ENCODE measurements at regions of chr12 and their contacts with region 1.

Region 1: GRCh38 chr12:89709157-89709994 is 738 bp upstream of the ATP2B1 start:
- DNase-seq: peak; percentile 97
- H3K4me3 Mint-ChIP-seq: peak overlapping the region; percentile 94
- H3K27ac Mint-ChIP-seq: peak overlapping the region; percentile 95
- H3K4me1 Mint-ChIP-seq: peaks cover 22% of the 10 kb centered on the region
- H3K27me3 Mint-ChIP-seq: no peaks in the 10 kb centered on the region
- CTCF ChIP-seq: no peak

Region 2: DNA sequence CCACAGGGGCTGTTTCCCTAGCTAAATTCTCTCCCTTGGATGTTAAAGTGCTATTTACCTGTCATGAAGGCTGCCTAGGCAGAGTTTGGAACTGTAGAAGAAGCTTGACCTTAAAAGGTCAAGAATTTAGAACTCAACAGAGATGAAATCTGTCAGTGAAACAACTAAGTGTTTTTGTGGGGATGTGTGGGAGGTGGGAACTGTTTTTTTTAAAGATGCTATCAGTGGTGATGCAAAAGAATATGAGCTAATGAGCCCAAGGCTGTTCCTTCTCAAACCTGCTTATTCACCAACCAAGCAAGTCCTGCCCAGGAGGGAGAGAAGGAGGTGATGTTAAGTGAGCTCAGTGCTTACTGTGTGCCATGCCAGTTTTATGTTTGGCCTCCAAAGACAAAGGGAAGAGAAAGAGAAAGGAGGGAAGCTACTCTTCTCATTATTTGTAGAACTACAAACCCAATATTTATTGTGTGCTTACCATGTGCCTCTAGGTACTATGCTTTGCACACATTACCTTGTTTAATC is 142.7 kb before region 1 on chr12:
- CTCF ChIA-PET with region 1: interaction called, 5 read pairs
- POLR2A ChIA-PET with region 1: interaction called, 16 read pairs
- intact Hi-C with region 1: no loop called
- DNase-seq: peak; percentile 67
- H3K4me3 Mint-ChIP-seq: peak overlapping the region; percentile 2
- H3K27ac Mint-ChIP-seq: peak overlapping the region; percentile 80
- H3K4me1 Mint-ChIP-seq: peaks cover 52% of the 10 kb centered on the region
- H3K27me3 Mint-ChIP-seq: no peaks in the 10 kb centered on the region
- CTCF ChIP-seq: no peak

Region 3: GRCh38 chr12:89756585-89757321 is 47.4 kb after region 1 on chr12:
- CTCF ChIA-PET with region 1: interaction called, 4 read pairs
- POLR2A ChIA-PET with region 1: interaction called, 34 read pairs
- intact Hi-C with region 1: loop called (anchors 1 kb)
- DNase-seq: peak; percentile 98
- H3K4me3 Mint-ChIP-seq: peak overlapping the region; percentile 38
- H3K27ac Mint-ChIP-seq: peak overlapping the region; percentile 95
- H3K4me1 Mint-ChIP-seq: peaks cover 34% of the 10 kb centered on the region
- H3K27me3 Mint-ChIP-seq: no peaks in the 10 kb centered on the region
- CTCF ChIP-seq: no peak

Region 4: DNA sequence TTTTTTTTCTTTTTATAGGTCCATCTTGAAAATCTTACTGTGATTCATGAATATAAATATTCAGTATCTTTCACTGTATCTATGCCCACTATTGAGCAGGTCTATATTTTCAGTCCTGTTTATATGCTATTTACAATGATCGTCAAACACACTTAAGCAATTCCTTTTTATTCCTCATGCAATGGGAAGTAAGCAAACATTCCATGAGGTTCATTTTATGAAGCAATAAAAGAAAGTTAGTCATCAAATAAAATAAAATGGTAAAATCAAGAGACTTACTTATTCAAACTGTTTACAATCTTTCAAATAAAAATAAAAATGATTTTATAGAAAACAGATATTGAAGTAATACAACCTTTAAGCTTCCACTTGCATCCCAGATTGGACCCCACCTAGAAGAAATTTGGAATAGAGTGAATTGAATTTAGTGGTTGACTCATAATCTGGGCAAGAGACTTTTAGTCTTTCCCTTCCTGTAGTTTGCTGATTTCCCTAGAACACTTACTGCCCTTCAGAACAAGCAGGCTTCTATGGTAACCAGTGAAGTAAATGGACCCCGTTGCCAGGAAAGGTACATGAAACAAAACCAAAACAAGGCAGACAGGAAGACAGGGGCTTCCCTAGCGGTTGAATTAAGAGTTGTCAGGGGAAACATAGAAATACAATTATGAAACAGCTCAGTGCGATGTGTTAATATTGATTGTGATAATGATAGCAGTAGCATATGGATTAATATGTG is 240.2 kb after region 1 on chr12:
- CTCF ChIA-PET with region 1: interaction called, 3 read pairs
- POLR2A ChIA-PET with region 1: interaction called, 37 read pairs
- intact Hi-C with region 1: loop called (anchors 1 kb)
- DNase-seq: peak; percentile 91
- H3K4me3 Mint-ChIP-seq: peak overlapping the region; percentile 13
- H3K27ac Mint-ChIP-seq: peak overlapping the region; percentile 93
- H3K4me1 Mint-ChIP-seq: peaks cover 42% of the 10 kb centered on the region
- H3K27me3 Mint-ChIP-seq: no peaks in the 10 kb centered on the region
- CTCF ChIP-seq: peak; percentile 29

Region 5: DNA sequence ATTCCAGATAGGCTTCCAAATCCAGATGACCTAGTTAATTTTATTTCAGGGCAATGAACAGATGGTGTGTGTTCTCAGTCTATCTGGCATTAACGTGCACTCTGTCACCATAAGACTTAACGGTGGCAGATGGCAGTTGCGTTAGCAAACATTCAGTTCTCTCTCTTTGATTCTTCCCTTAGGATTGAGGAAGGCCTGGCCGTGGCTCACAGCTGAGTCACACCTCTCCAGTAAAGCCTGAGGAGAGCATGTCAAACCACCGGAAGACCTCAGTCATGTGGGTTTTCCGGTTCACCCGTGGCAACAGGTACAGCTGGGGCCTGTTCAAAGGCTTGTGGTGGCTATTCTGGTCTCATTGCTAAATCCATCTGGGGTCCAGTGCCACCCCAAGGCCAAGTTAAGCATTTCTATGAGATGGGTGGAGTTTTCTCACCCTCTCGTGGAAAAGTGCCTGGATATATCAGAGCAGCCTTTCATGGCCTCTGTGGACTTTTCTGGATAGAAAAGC is 544.4 kb after region 1 on chr12:
- CTCF ChIA-PET with region 1: no interaction called
- POLR2A ChIA-PET with region 1: interaction called, 9 read pairs
- intact Hi-C with region 1: loop called (anchors 1 kb)
- DNase-seq: peak; percentile 92
- H3K4me3 Mint-ChIP-seq: no peak overlapping the region
- H3K27ac Mint-ChIP-seq: peak overlapping the region; percentile 67
- H3K4me1 Mint-ChIP-seq: peaks cover 20% of the 10 kb centered on the region
- H3K27me3 Mint-ChIP-seq: no peaks in the 10 kb centered on the region
- CTCF ChIP-seq: peak; percentile 16

Region 6: GRCh38 chr12:90290980-90291975 is 581.9 kb after region 1 on chr12:
- CTCF ChIA-PET with region 1: no interaction called
- POLR2A ChIA-PET with region 1: no interaction called
- intact Hi-C with region 1: no loop called
- DNase-seq: no peak
- H3K4me3 Mint-ChIP-seq: no peak overlapping the region
- H3K27ac Mint-ChIP-seq: no peak overlapping the region
- H3K4me1 Mint-ChIP-seq: no peaks in the 10 kb centered on the region
- H3K27me3 Mint-ChIP-seq: no peaks in the 10 kb centered on the region
- CTCF ChIP-seq: no peak

Region 7: GRCh38 chr12:90940872-90941499 is 1231.6 kb after region 1 on chr12:
- CTCF ChIA-PET with region 1: no interaction called
- POLR2A ChIA-PET with region 1: interaction called, 5 read pairs
- intact Hi-C with region 1: loop called (anchors 1 kb)
- DNase-seq: peak; percentile 68
- H3K4me3 Mint-ChIP-seq: no peak overlapping the region
- H3K27ac Mint-ChIP-seq: no peak overlapping the region
- H3K4me1 Mint-ChIP-seq: peaks cover 6% of the 10 kb centered on the region
- H3K27me3 Mint-ChIP-seq: no peaks in the 10 kb centered on the region
- CTCF ChIP-seq: peak; percentile 68